ENCODE measurements at regions of chr10 and their contacts with region 1.

Region 1: GRCh38 chr10:22505911-22506685 is 160.8 kb downstream of the SPAG6 start:
- DNase-seq: peak in 5 of 9 donors; percentile 13 to 46 (median 19)
- ATAC-seq: peak; percentile 94
- H3K4me3 ChIP-seq: no peak overlapping the region
- H3K4me3 Mint-ChIP-seq: peak overlapping the region in 7 of 10 donors; percentile 12 to 62 (median 42)
- H3K27ac ChIP-seq: no peak overlapping the region
- H3K27ac Mint-ChIP-seq: peak overlapping the region in 2 of 9 donors; percentile 18 to 50
- H3K4me1 ChIP-seq: peaks cover 0 to 17% of the 10 kb centered on the region in 2 donors
- H3K4me1 Mint-ChIP-seq: peaks cover 6 to 25% (median 14%) of the 10 kb centered on the region in 7 donors
- H3K27me3 ChIP-seq: no peaks in the 10 kb centered on the region
- H3K27me3 Mint-ChIP-seq: peaks cover 7 to 26% (median 17%) of the 10 kb centered on the region in 5 donors

Region 2: GRCh38 chr10:22491931-22492615 is 14.0 kb before region 1 on chr10:
- CTCF ChIA-PET with region 1: no interaction called
- POLR2A ChIA-PET with region 1: no interaction called
- intact Hi-C with region 1: loop called in 1 of 2 experiments (anchors 1 kb)
- DNase-seq: peak in 7 of 9 donors; percentile 13 to 44 (median 32)
- ATAC-seq: peak; percentile 75
- H3K4me3 ChIP-seq: no peak overlapping the region
- H3K4me3 Mint-ChIP-seq: peak overlapping the region in 5 of 10 donors; percentile 15 to 78 (median 29)
- H3K27ac ChIP-seq: no peak overlapping the region
- H3K27ac Mint-ChIP-seq: peak overlapping the region in 1 of 9 donors; percentile 48
- H3K4me1 ChIP-seq: peaks cover 16 to 19% of the 10 kb centered on the region in 2 donors
- H3K4me1 Mint-ChIP-seq: peaks cover 14 to 23% (median 18%) of the 10 kb centered on the region in 7 donors
- H3K27me3 ChIP-seq: no peaks in the 10 kb centered on the region
- H3K27me3 Mint-ChIP-seq: peaks cover under 1 to 23% (median 13%) of the 10 kb centered on the region in 5 donors